Ascending aorta (tissue), 2 donors: ENCODE measurements at regions of chr12 and their contacts with region 1.

Region 1: GRCh38 chr12:96194971-96195844 is 1.0 kb downstream of the ELK3 start:
- DNase-seq: peak; percentile 31 to 81
- H3K4me3 ChIP-seq: peak overlapping the region; percentile 85 to 95
- H3K27ac ChIP-seq: peak overlapping the region; percentile 72 to 77
- H3K4me1 ChIP-seq: peaks cover 5 to 22% of the 10 kb centered on the region in 2 donors
- H3K27me3 ChIP-seq: no peaks in the 10 kb centered on the region
- CTCF ChIP-seq: no peak

Region 2: DNA sequence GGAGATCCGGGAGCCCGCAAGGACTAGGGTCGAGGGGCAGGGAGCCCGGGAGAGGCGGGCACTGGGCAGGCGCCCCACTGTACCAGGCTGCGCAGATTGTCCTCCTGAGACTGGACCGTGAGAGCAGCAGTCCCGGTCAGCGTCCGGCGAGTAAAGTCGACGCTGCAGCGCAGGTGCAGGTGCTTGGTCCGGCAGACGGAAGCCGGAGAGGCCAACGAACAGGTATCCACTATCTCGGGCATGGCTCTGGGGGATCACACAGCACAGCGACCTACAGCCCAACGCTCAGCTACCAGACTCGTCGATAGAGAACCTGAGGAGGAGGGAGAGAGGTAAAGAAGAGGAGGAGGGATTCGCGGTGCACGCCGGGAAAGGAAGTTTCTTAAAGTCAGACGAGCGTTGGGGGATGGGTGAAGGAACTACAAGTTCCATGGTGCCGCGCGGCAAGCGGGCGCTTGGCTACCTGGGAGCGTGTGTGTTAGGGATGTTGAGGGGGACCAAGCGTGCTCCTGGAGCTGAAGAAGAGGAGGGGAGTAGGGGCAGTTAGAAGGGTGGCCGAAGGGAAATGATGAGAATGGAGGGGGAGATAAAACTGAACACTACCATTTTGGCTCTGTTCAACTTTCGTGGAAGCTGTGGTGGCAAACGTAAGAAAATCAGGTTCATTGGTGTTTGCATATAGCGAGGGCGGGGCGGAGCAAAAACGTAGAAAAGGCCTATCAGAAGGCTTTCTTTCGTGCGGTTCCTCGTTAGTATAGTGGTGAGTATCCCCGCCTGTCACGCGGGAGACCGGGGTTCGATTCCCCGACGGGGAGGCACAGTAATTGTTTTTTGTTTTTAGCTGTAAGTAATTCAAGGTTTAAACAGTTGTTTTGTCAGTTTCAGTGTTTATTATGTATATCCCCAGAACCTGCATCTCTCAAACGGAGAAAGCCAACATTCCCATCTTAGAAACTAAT is 159.7 kb before region 1 on chr12 and contains the start of gene LTA4H:
- intact Hi-C with region 1: loop called (anchors 2 kb)
- DNase-seq: peak; percentile 93 to 99
- H3K4me3 ChIP-seq: peak within 1 kb of the TSS; percentile 77 to 83
- H3K27ac ChIP-seq: peak within 1 kb of the TSS; percentile 78 to 93
- H3K4me1 ChIP-seq: peaks cover 0 to 13% of the 10 kb centered on the region in 2 donors
- H3K27me3 ChIP-seq: no peaks in the 10 kb centered on the region
- CTCF ChIP-seq: no peak
- total RNA-seq, gene LTA4H: 47.3 TPM

Region 3: GRCh38 chr12:96094201-96094600 is 101.0 kb before region 1 on chr12:
- intact Hi-C with region 1: no loop called
- DNase-seq: no peak
- H3K4me3 ChIP-seq: no peak overlapping the region
- H3K27ac ChIP-seq: no peak overlapping the region
- H3K4me1 ChIP-seq: no peaks in the 10 kb centered on the region
- H3K27me3 ChIP-seq: no peaks in the 10 kb centered on the region
- CTCF ChIP-seq: no peak

Region 4: DNA sequence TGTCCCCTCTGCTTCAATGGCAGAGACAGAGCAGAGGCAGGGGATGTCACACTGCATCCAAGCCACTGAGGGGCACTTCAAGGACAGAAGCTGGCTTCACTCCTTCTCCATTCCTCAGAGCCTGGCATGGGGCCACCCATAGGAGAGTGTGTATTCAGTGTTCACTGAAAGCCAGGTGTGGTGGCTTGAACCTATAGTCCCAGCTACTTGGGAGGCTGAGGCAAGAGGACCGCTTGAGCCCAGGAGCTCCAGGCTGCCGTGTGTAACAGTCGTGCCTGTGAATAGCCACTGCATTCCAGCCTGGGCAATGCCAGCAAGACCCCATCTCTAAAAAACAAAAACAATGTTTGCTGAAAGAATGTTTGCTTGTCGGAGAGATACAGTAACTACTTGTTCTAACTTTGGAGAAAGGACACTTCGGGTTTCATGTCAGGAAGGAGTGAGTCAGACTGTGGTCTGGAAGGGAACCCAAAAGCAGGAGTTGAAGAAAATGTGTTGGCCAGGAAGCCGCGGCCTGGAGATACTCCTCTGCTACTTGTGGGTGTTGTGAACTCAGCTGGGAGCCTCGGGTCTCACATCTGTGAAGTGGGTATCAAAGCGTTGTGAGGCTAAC is 42.4 kb after region 1 on chr12:
- intact Hi-C with region 1: loop called (anchors 2 kb)
- DNase-seq: peak in 1 of 2 donors; percentile 90
- H3K4me3 ChIP-seq: peak overlapping the region in 1 of 2 donors; percentile 12
- H3K27ac ChIP-seq: peak overlapping the region; percentile 69 to 78
- H3K4me1 ChIP-seq: peaks cover 25 to 39% of the 10 kb centered on the region in 2 donors
- H3K27me3 ChIP-seq: no peaks in the 10 kb centered on the region
- CTCF ChIP-seq: no peak